Endothelial cell of umbilical vein (primary cell): ENCODE measurements at regions of chrX and their contacts with region 1.

Region 1: GRCh38 chrX:24838629-24839028 is 144.9 kb downstream of the POLA1 start:
- DNase-seq: peak; percentile 42
- H3K4me3 ChIP-seq: no peak overlapping the region
- H3K27ac ChIP-seq: no peak overlapping the region
- H3K4me1 ChIP-seq: no peaks in the 10 kb centered on the region
- H3K27me3 ChIP-seq: no peaks in the 10 kb centered on the region
- CTCF ChIP-seq: peak in 1 of 2 donors; percentile 21
- POLR2A ChIP-seq: no peak

Region 2: GRCh38 chrX:24828147-24828546 is 10.5 kb before region 1 on chrX:
- CTCF ChIA-PET with region 1: interaction called, 11 read pairs
- POLR2A ChIA-PET with region 1: no interaction called
- dilution Hi-C with region 1: no loop called
- intact Hi-C with region 1: no loop called
- DNase-seq: no peak
- H3K4me3 ChIP-seq: no peak overlapping the region
- H3K27ac ChIP-seq: no peak overlapping the region
- H3K4me1 ChIP-seq: no peaks in the 10 kb centered on the region
- H3K27me3 ChIP-seq: no peaks in the 10 kb centered on the region
- CTCF ChIP-seq: no peak
- POLR2A ChIP-seq: no peak

Region 3: GRCh38 chrX:24870143-24870542 is 31.5 kb after region 1 on chrX:
- CTCF ChIA-PET with region 1: interaction called, 11 read pairs
- POLR2A ChIA-PET with region 1: no interaction called
- dilution Hi-C with region 1: no loop called
- intact Hi-C with region 1: no loop called
- DNase-seq: no peak
- H3K4me3 ChIP-seq: no peak overlapping the region
- H3K27ac ChIP-seq: no peak overlapping the region
- H3K4me1 ChIP-seq: no peaks in the 10 kb centered on the region
- H3K27me3 ChIP-seq: no peaks in the 10 kb centered on the region
- CTCF ChIP-seq: no peak
- POLR2A ChIP-seq: no peak

Region 4: DNA sequence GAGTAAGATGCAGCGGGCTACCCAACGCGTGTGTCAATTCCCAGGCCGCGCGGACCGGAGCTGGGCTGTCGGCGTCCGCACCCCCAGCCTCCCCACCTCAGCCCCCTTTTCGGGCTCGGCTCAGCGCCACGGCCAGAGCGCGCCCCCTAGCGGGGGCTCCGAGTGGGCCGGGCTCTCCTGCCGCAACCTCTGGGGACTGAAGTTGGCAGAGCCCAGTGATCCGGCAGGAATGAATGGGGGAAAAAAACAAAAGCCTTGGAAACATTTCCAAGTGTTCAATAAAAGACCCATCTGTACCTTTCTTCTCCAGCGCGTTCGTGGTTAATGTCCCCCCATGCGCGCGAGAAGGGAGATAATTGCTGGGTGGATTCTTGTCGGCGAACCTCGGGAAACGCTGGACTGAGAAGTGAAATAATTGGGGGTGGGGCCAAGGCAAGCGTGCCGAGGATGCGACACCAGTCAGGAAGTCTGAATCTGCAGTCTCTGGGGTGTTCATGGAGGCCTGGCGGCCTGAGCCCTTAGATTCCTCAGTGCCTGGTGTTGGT is 182.3 kb after region 1 on chrX:
- CTCF ChIA-PET with region 1: interaction called, 48 read pairs
- POLR2A ChIA-PET with region 1: no interaction called
- dilution Hi-C with region 1: no loop called
- intact Hi-C with region 1: loop called (anchors 1 kb)
- DNase-seq: no peak
- H3K4me3 ChIP-seq: no peak overlapping the region
- H3K27ac ChIP-seq: no peak overlapping the region
- H3K4me1 ChIP-seq: peaks cover 2% of the 10 kb centered on the region
- H3K27me3 ChIP-seq: peaks cover 74 to 92% of the 10 kb centered on the region in 2 experiments
- CTCF ChIP-seq: peak; percentile 51 to 76
- POLR2A ChIP-seq: no peak